ENCODE measurements at regions of chr16 and their contacts with region 1.

Region 1: GRCh38 chr16:47141773-47142485 is 1.8 kb downstream of the NETO2 start:
- DNase-seq: peak; percentile 89
- H3K4me3 Mint-ChIP-seq: peak overlapping the region; percentile 76
- H3K27ac Mint-ChIP-seq: peak overlapping the region; percentile 76
- H3K4me1 Mint-ChIP-seq: peaks cover 27% of the 10 kb centered on the region
- H3K27me3 Mint-ChIP-seq: peaks cover 28% of the 10 kb centered on the region

Region 2: GRCh38 chr16:47037746-47038458 is 104.0 kb before region 1 on chr16:
- CTCF ChIA-PET with region 1: interaction called, 10 read pairs
- POLR2A ChIA-PET with region 1: no interaction called
- DNase-seq: peak; percentile 88
- H3K4me3 Mint-ChIP-seq: peak overlapping the region; percentile 73
- H3K27ac Mint-ChIP-seq: no peak overlapping the region
- H3K4me1 Mint-ChIP-seq: peaks cover 5% of the 10 kb centered on the region
- H3K27me3 Mint-ChIP-seq: peaks cover 9% of the 10 kb centered on the region

Region 3: GRCh38 chr16:47110939-47111338 is 31.0 kb before region 1 on chr16:
- CTCF ChIA-PET with region 1: interaction called, 11 read pairs
- POLR2A ChIA-PET with region 1: no interaction called
- DNase-seq: no peak
- H3K4me3 Mint-ChIP-seq: no peak overlapping the region
- H3K27ac Mint-ChIP-seq: no peak overlapping the region
- H3K4me1 Mint-ChIP-seq: peaks cover 11% of the 10 kb centered on the region
- H3K27me3 Mint-ChIP-seq: no peaks in the 10 kb centered on the region

Region 4: DNA sequence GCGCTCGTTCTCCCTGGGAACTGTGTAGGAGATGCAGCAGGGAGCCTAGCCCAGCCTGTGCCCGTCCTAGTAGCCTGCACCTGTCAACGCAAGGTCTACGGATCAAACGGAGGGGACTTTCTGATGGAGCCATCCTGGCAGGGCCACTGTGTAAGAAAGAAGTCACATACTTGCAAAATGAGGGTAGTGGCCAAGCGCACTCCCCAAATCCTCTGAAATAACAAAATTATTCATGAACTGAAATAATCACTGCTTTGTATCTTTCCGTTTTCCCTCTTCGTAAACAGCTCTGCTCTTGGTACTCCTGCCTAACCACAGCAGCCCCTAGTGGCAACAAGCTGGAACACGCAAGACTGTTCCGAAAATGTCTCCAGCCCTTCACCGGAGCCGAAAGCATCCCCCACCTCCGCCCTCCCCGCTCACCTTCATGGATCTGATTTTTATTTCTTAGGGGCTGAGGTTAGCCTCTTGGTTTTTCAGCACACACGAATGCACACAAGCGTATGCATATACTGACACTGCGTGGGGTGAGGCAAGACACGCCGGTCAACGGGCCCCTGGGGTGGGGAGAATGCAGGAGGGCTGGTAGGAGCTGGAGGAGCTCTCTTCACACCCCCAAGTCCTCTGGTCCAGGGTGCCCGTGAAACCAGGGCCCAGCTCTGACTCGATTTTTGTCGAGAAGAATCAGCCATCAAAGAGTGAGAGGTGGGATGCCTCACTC is 913.1 kb after region 1 on chr16:
- CTCF ChIA-PET with region 1: interaction called, 10 read pairs
- POLR2A ChIA-PET with region 1: no interaction called
- DNase-seq: peak; percentile 45
- H3K4me3 Mint-ChIP-seq: no peak overlapping the region
- H3K27ac Mint-ChIP-seq: no peak overlapping the region
- H3K4me1 Mint-ChIP-seq: no peaks in the 10 kb centered on the region
- H3K27me3 Mint-ChIP-seq: peaks cover 25% of the 10 kb centered on the region

Region 5: GRCh38 chr16:48156790-48157209 is 1014.9 kb after region 1 on chr16:
- CTCF ChIA-PET with region 1: interaction called, 15 read pairs
- POLR2A ChIA-PET with region 1: interaction called, 4 read pairs
- DNase-seq: peak; percentile 82
- H3K4me3 Mint-ChIP-seq: no peak overlapping the region
- H3K27ac Mint-ChIP-seq: no peak overlapping the region
- H3K4me1 Mint-ChIP-seq: peaks cover 14% of the 10 kb centered on the region
- H3K27me3 Mint-ChIP-seq: peaks cover 21% of the 10 kb centered on the region

Region 6: DNA sequence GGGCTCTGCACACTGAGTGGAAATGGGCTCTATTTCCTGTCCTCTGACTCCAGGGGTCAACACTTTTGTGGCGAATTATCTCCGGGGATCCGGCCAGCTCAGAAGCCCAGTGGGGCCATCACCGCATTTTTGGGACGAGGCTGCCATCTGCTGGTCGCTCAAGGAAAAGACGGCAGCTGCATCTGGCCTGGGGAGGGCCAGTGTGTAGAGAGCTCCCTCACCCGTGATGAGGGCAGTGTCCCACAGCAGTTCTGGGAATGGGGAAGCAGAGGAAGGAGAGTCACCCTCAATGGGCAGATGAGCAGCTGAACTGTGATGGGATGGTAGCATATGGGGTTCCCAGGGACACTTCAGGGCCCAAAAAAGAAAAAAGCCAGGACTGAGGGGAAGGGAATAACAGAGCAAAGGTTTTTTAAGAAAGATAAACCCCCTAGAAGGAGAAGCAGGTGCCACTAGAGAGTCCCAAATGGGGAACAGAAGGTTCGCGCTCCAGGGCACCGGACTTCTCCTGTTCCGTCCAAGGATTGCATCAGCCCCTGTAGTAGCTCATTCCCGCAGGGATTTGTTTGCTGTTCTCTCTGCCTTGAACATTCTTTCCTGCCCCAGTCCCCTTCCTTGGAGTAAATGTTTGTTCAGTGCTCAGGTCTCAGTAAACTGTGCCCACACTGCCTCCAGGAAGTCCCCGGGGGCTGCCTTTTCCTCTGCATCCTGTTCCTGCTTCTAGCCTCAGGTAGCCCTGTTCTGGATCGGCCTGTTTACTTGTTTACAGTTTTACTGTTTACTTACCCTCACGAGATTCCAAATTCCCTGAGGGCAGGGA is 1023.2 kb after region 1 on chr16:
- CTCF ChIA-PET with region 1: interaction called, 33 read pairs
- POLR2A ChIA-PET with region 1: interaction called, 3 read pairs
- DNase-seq: peak; percentile 62
- H3K4me3 Mint-ChIP-seq: no peak overlapping the region
- H3K27ac Mint-ChIP-seq: no peak overlapping the region
- H3K4me1 Mint-ChIP-seq: peaks cover 14% of the 10 kb centered on the region
- H3K27me3 Mint-ChIP-seq: peaks cover 4% of the 10 kb centered on the region